B cell (primary cell): ENCODE measurements at regions of chr6 and their contacts with region 1.

Region 1: DNA sequence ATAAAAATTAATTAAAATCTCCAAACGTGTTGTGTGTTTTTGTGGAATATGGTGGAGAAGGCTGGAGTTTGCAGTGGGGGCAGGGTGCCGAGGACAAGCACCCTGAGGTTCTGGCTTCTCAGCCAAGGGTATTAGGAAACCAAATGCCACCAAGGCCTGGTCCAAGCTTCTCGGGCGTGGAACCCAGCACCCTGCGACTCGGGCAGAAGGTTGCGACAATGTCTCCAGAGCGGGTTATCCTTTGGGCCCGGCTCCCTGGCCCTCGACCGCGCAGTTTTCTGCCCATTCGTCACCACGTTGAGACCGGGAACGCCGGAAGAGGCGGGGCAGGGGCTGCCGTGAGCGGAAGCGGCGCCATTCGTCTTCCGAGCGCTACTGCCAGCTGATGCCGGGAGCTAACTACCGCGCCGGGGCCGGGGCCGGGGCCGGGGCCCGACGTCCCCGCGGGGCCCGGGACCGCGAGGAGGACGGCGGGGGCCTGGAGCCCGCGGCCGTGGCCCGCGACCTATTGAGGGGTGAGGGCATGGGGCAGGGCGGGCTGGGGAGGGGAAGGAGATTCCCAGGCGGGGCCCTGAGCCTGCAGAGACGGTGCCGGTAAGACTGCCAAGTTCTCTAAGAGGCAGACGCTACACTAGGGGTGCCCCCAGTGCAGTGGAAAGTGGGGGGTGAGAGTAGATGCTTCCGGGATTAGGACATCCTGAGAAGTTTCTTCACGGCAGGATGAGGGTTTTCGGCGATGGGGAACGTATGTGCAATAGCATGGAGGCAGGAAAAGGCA is at the start of gene RRP36:
- DNase-seq: peak; percentile 73
- ATAC-seq: peak; percentile 92
- H3K4me3 ChIP-seq: peak within 1 kb of the TSS; percentile 77 to 99 (median 87)
- H3K4me3 Mint-ChIP-seq: peak within 1 kb of the TSS; percentile 98
- H3K27ac ChIP-seq: peak within 1 kb of the TSS; percentile 25 to 72
- H3K27ac Mint-ChIP-seq: peak within 1 kb of the TSS; percentile 82
- H3K4me1 ChIP-seq: peaks cover 3 to 25% of the 10 kb centered on the region in 2 donors
- H3K4me1 Mint-ChIP-seq: peaks cover 27% of the 10 kb centered on the region
- H3K27me3 ChIP-seq: no peaks in the 10 kb centered on the region
- H3K27me3 Mint-ChIP-seq: no peaks in the 10 kb centered on the region
- CTCF ChIP-seq: no peak
- total RNA-seq, gene RRP36: 43.5 and 46.2 TPM in 2 replicates

Region 2: DNA sequence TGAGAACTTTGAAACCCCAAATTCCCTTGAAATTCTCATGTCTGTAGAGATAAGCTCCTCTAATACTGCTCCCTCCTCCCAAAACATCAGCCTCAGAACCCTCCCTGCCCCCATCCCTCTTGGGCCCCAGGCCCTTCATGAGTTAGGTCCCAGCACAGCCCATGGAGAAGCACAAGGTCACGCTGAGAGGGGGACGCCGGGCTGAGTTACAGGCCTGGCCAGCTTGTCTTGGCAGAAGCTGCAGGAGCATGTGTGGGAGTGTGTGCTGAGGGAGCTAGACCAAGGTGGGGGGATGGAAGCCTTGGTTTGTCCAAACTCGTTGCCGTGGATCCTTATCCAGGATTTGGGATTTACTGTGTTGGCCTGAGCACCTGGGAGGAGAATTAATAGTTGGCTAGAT is 114.1 kb before region 1 on chr6:
- CTCF ChIA-PET with region 1: no interaction called
- POLR2A ChIA-PET with region 1: no interaction called
- intact Hi-C with region 1: no loop called
- DNase-seq: no peak
- ATAC-seq: no peak
- H3K4me3 ChIP-seq: no peak overlapping the region
- H3K4me3 Mint-ChIP-seq: no peak overlapping the region
- H3K27ac ChIP-seq: no peak overlapping the region
- H3K27ac Mint-ChIP-seq: no peak overlapping the region
- H3K4me1 ChIP-seq: peaks cover 3 to 12% of the 10 kb centered on the region in 2 donors
- H3K4me1 Mint-ChIP-seq: peaks cover 7% of the 10 kb centered on the region
- H3K27me3 ChIP-seq: peaks cover 0 to 6% (median under 1%) of the 10 kb centered on the region in 4 experiments
- H3K27me3 Mint-ChIP-seq: peaks cover 4% of the 10 kb centered on the region
- CTCF ChIP-seq: no peak

Region 3: DNA sequence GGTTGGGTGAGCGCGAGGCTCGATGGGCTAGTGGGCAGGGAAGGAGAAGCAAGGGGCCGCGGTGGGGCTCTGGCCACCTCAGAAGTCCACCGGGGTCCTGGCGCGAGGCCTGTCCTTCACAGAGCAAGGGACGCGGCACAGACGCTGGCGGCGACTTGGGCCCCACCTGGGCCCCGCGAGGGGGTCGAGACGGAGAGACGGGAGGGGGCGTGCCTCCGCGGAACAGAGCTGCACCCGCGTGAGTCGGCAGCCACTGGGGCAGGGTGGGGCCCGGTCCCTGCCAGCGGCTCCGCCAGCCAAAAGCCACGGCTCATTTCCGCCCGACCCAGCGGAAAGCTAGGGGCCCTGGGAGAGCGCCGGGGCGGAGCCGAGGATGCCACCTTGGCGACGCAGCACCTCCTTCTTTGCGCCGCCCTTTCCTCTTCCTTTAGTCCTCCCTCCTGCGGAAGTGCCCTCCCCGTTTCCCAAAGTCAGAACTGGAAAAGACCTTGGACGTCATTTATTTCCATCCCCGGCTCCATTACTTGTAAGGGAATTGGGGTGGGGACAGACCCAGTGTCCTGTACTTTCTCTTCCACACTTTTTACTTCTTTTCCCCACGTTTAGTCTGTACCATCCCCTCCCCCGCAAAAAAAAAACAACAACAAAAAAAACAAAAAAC is 32.2 kb after region 1 on chr6 and contains the start of gene CUL7:
- CTCF ChIA-PET with region 1: interaction called, 3 read pairs
- POLR2A ChIA-PET with region 1: interaction called, 12 read pairs
- intact Hi-C with region 1: no loop called
- DNase-seq: peak; percentile 85
- ATAC-seq: peak; percentile 98
- H3K4me3 ChIP-seq: peak within 1 kb of the TSS; percentile 24 to 84 (median 76)
- H3K4me3 Mint-ChIP-seq: peak within 1 kb of the TSS; percentile 94
- H3K27ac ChIP-seq: peak within 1 kb of the TSS; percentile 73 to 85
- H3K27ac Mint-ChIP-seq: peak within 1 kb of the TSS; percentile 95
- H3K4me1 ChIP-seq: peaks cover 22 to 25% of the 10 kb centered on the region in 2 donors
- H3K4me1 Mint-ChIP-seq: peaks cover 37% of the 10 kb centered on the region
- H3K27me3 ChIP-seq: no peaks in the 10 kb centered on the region
- H3K27me3 Mint-ChIP-seq: no peaks in the 10 kb centered on the region
- CTCF ChIP-seq: no peak
- total RNA-seq, gene CUL7: 21.4 and 22.7 TPM in 2 replicates